ENCODE measurements at regions of chr1 and their contacts with region 1.

Region 1: DNA sequence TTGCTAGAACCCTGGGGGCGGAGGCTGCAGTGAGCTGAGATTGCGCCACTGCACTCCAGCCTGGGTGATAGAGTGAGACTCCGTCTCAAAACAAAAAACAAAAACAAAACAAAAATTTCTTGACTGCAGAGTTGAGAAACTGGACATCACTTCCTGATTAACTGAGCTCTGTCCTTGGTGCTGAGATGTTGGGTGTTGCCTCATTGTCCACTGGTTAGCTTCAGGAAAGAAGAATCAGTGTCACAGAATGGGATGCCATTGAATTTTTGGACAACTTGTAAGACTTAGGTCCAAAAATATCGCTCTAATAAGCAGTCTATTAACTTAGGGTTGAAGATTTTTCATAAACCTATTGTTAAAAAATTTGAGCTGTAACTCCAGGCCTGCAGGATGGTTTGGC is 23.8 kb upstream of the KCNA10 start:
- H3K4me3 ChIP-seq: no peak overlapping the region
- H3K27ac ChIP-seq: no peak overlapping the region
- H3K4me1 ChIP-seq: no peaks in the 10 kb centered on the region
- CTCF ChIP-seq: no peak

Region 2: GRCh38 chr1:110554871-110555801 is 12.4 kb after region 1 on chr1:
- CTCF ChIA-PET with region 1: interaction called, 11 read pairs
- POLR2A ChIA-PET with region 1: no interaction called
- H3K4me3 ChIP-seq: 0 out of 2 replicates have a peak overlapping the region, but pooled peaks have one; percentile 4
- H3K27ac ChIP-seq: no peak overlapping the region
- H3K4me1 ChIP-seq: no peaks in the 10 kb centered on the region
- CTCF ChIP-seq: peak; percentile 69

Measured in HEK293 (cell line).